ENCODE measurements at regions of chr11 and their contacts with region 1.

Region 1: GRCh38 chr11:75814686-75815344 is at the start of gene UVRAG:
- DNase-seq: peak; percentile 98
- ATAC-seq: peak; percentile 92
- H3K4me3 ChIP-seq: peak within 1 kb of the TSS; percentile 68 to 90
- H3K27ac ChIP-seq: peak within 1 kb of the TSS; percentile 63
- H3K4me1 ChIP-seq: peaks cover 22 to 33% of the 10 kb centered on the region in 2 experiments
- H3K27me3 ChIP-seq: no peaks in the 10 kb centered on the region
- CTCF ChIP-seq: no peak
- POLR2A ChIP-seq: peak; percentile 27
- RAD21 ChIP-seq: no peak
- total RNA-seq, gene UVRAG: 12.3 TPM

Region 2: DNA sequence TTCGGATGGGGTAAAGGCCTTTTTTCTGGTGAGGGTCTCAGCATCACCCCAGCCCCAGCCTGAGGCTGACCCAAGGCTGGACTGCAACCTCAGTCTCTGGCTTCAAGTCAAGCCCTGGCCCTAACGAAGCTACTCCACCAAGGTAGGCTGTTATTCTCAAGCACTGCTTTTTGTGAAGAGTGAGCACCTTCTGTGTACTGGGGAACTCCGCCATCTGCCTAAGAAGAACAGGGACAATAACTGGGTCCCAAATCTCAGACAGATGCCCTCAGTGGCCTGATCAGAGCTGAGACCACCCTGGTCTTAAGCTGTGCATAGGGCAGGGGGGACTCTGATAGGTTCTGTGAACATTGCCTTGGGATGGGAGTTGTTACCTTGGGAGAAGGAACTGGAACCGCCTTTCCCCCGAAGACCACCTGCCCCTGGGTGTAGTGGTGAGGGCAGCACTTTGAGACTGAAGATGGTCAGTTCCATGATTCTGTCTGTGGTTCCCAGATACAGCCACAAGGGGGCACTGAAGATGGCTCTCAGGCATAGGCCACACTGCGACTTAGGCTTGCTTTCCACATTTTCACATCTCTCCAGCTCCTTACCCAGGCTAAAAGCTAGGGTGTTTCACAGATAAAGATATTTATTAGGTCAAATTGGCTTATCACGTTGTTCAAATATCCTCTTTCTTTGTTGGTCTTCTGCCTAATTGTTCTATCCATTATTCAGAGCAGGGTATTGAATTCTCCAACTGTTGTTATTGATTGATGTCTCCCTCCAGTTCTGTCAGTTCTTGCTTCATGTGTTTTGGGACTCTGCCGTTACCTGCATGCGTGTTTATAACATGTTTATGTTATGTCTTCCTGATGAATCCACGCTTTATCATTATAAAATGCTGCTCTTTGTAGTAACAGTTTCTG is 11.6 kb before region 1 on chr11:
- CTCF ChIA-PET with region 1: interaction called, 10 read pairs
- POLR2A ChIA-PET with region 1: no interaction called
- RAD21 ChIA-PET with region 1: no interaction called
- intact Hi-C with region 1: no loop called
- DNase-seq: peak; percentile 46
- ATAC-seq: peak; percentile 98
- H3K4me3 ChIP-seq: no peak overlapping the region
- H3K27ac ChIP-seq: no peak overlapping the region
- H3K4me1 ChIP-seq: no peaks in the 10 kb centered on the region
- H3K27me3 ChIP-seq: no peaks in the 10 kb centered on the region
- CTCF ChIP-seq: peak; percentile 77 to 93 (median 89)
- POLR2A ChIP-seq: no peak
- RAD21 ChIP-seq: peak; percentile 80